Ascending aorta (tissue), 2 donors: ENCODE measurements at regions of chr16 and their contacts with region 1.

Region 1: DNA sequence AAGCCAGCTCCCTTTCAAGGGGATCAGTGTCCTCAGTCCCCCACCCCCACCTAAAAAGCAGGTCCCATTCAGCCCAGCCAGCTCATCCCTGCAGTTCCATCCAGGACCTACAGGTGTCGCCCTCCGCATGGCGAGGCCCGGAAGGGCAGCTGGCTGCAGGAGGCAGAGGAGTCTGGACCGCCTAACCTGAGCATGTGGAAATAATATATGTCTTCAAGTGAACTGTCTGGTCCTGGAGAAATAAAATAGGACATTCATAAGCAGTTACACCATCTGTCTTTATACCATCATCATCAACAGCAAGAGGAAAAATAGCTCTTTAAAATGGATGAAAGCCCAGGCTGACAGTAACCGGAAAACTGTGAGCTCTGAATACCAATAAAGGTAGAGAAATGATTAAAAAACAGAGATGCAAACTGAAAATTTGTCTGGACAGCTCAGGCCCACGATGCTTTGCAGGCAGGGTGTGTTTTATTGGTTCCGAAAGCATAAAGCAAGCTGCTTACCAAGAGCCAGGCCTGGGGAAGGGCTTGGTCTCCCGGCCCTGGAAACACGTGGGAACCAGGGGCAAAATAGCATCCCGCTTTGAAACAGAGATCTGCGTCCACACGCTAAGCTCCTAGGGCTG is 215.2 kb downstream of the ZFHX3 start:
- DNase-seq: peak; percentile 26 to 89
- H3K4me3 ChIP-seq: no peak overlapping the region
- H3K27ac ChIP-seq: peak overlapping the region; percentile 63 to 66
- H3K4me1 ChIP-seq: peaks cover 6 to 16% of the 10 kb centered on the region in 2 donors
- H3K27me3 ChIP-seq: no peaks in the 10 kb centered on the region
- CTCF ChIP-seq: peak; percentile 83 to 99 (median 99)

Region 2: GRCh38 chr16:73196670-73197069 is 363.9 kb after region 1 on chr16:
- intact Hi-C with region 1: loop called (anchors 2 kb)
- DNase-seq: peak in 1 of 2 donors; percentile 84
- H3K4me3 ChIP-seq: no peak overlapping the region
- H3K27ac ChIP-seq: no peak overlapping the region
- H3K4me1 ChIP-seq: no peaks in the 10 kb centered on the region
- H3K27me3 ChIP-seq: no peaks in the 10 kb centered on the region
- CTCF ChIP-seq: peak; percentile 52 to 74 (median 61)